CD8-positive, alpha-beta T cell (primary cell): ENCODE measurements at regions of chr1 and their contacts with region 1.

Region 1: DNA sequence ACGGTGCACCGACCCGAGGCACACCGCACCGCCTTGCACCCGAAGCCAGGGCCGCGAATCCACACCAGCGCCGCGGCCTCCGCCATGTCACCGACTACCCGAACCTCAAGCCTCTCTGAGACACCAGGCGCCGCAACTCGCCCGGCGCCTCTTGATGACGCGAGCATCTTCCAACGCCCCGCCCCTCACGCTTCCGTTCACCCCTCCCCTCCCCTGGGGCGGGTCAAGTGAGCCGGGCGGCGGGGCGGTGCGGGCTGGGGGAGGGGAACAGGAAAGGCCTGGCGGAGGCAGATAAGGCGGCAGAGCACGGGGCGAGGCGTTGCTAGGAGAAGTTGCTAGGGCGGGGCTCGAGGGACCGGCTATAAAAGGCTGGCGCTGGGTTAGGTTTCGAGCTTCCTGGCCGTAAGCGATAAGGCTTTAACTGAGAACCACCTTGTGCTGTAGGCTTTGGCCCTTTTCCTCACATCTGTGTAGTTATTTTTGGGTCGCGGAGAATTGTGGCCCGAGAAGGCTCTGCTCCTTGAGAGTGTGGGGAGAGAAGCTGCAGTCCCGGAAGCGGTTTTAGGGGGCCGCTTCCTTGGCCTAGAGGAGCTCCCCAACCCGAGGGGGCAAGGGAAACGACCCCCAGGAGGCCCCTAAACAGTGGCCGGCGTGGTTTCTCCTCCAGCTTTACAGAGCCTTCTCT is at the start of gene SDE2:
- DNase-seq: peak; percentile 99 to 100 (median 100)
- ATAC-seq: peak; percentile 80
- H3K4me3 ChIP-seq: peak within 1 kb of the TSS; percentile 82 to 92
- H3K4me3 Mint-ChIP-seq: peak within 1 kb of the TSS; percentile 100
- H3K27ac ChIP-seq: peak within 1 kb of the TSS; percentile 99
- H3K27ac Mint-ChIP-seq: peak within 1 kb of the TSS; percentile 100
- H3K4me1 ChIP-seq: peaks cover 88% of the 10 kb centered on the region
- H3K4me1 Mint-ChIP-seq: peaks cover 79% of the 10 kb centered on the region
- H3K27me3 ChIP-seq: no peaks in the 10 kb centered on the region
- H3K27me3 Mint-ChIP-seq: no peaks in the 10 kb centered on the region
- CTCF ChIP-seq: no peak
- total RNA-seq, gene SDE2: 53.3 to 55.3 TPM

Region 2: DNA sequence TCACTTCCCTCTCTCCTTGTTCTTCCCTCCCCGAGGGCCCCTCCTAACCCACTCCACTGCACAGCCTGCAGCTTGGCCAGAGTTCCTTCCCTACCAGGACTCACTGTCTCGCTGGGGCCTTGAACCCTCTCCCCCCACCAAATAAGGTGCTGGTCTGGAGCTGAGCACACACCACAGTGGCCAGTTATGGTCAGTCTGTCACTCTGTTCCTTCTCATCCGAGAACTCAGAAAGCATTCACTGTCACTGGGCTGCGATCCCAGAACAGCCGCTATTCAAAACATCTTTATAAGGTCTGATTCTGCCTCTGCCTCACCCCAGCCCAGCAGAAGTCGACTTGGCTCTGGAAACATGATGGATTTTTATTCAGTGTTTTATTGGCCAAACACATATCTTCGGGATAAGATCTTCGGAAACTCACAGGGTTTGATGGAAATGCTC is 551.7 kb before region 1 on chr1:
- CTCF ChIA-PET with region 1: no interaction called
- POLR2A ChIA-PET with region 1: interaction called, 25 read pairs
- intact Hi-C with region 1: loop called in 1 of 2 experiments (anchors 1 kb)
- DNase-seq: peak in 1 of 9 experiments; percentile 25
- ATAC-seq: no peak
- H3K4me3 ChIP-seq: no peak overlapping the region
- H3K4me3 Mint-ChIP-seq: no peak overlapping the region
- H3K27ac ChIP-seq: no peak overlapping the region
- H3K27ac Mint-ChIP-seq: peak overlapping the region; percentile 14
- H3K4me1 ChIP-seq: peaks cover 35% of the 10 kb centered on the region
- H3K4me1 Mint-ChIP-seq: peaks cover 51% of the 10 kb centered on the region
- H3K27me3 ChIP-seq: no peaks in the 10 kb centered on the region
- H3K27me3 Mint-ChIP-seq: no peaks in the 10 kb centered on the region
- CTCF ChIP-seq: no peak

Region 3: GRCh38 chr1:225881969-225882693 is 117.2 kb before region 1 on chr1 and contains the start of gene TMEM63A:
- CTCF ChIA-PET with region 1: no interaction called
- POLR2A ChIA-PET with region 1: interaction called, 10 read pairs
- intact Hi-C with region 1: no loop called
- DNase-seq: peak; percentile 78 to 95 (median 92)
- ATAC-seq: peak; percentile 72
- H3K4me3 ChIP-seq: peak within 1 kb of the TSS; percentile 85 to 100
- H3K4me3 Mint-ChIP-seq: peak within 1 kb of the TSS; percentile 94
- H3K27ac ChIP-seq: peak within 1 kb of the TSS; percentile 65 to 84
- H3K27ac Mint-ChIP-seq: peak within 1 kb of the TSS; percentile 97
- H3K4me1 ChIP-seq: peaks cover 42% of the 10 kb centered on the region
- H3K4me1 Mint-ChIP-seq: peaks cover 52% of the 10 kb centered on the region
- H3K27me3 ChIP-seq: no peaks in the 10 kb centered on the region
- H3K27me3 Mint-ChIP-seq: no peaks in the 10 kb centered on the region
- CTCF ChIP-seq: no peak
- total RNA-seq, gene TMEM63A: 132 to 144 TPM

Region 4: GRCh38 chr1:225923692-225924555 is 75.4 kb before region 1 on chr1 and contains the start of gene PYCR2:
- CTCF ChIA-PET with region 1: no interaction called
- POLR2A ChIA-PET with region 1: interaction called, 10 read pairs
- intact Hi-C with region 1: loop called (anchors 1 to 2 kb)
- DNase-seq: peak; percentile 90 to 98 (median 92)
- ATAC-seq: peak; percentile 98
- H3K4me3 ChIP-seq: peak within 1 kb of the TSS; percentile 75 to 79
- H3K4me3 Mint-ChIP-seq: peak within 1 kb of the TSS; percentile 94
- H3K27ac ChIP-seq: peak within 1 kb of the TSS; percentile 75 to 91
- H3K27ac Mint-ChIP-seq: peak within 1 kb of the TSS; percentile 93
- H3K4me1 ChIP-seq: peaks cover 75% of the 10 kb centered on the region
- H3K4me1 Mint-ChIP-seq: peaks cover 63% of the 10 kb centered on the region
- H3K27me3 ChIP-seq: no peaks in the 10 kb centered on the region
- H3K27me3 Mint-ChIP-seq: no peaks in the 10 kb centered on the region
- CTCF ChIP-seq: no peak
- total RNA-seq, gene PYCR2: 27.3 to 30.6 TPM

Region 5: DNA sequence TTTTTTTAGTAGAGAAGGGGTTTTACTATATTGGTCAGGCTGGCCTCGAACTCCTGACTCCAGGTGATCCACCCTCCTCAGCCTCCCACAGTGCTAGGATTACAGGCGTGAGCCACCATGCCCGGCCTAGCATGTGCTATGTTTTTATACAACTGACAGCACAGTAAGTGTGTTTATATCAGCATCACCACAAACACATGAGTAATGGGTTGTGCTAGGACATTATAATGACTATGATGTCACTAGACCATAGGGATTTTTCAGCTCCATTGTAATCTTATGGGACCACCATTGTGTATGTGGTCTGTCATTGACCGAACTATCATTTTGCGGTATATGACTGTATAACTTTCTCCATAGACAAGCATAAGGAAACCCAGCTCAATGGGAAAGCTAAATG is 64.7 kb before region 1 on chr1:
- CTCF ChIA-PET with region 1: no interaction called
- POLR2A ChIA-PET with region 1: no interaction called
- intact Hi-C with region 1: no loop called
- DNase-seq: no peak
- ATAC-seq: no peak
- H3K4me3 ChIP-seq: no peak overlapping the region
- H3K4me3 Mint-ChIP-seq: no peak overlapping the region
- H3K27ac ChIP-seq: no peak overlapping the region
- H3K27ac Mint-ChIP-seq: no peak overlapping the region
- H3K4me1 ChIP-seq: peaks cover 4% of the 10 kb centered on the region
- H3K4me1 Mint-ChIP-seq: peaks cover 2% of the 10 kb centered on the region
- H3K27me3 ChIP-seq: no peaks in the 10 kb centered on the region
- H3K27me3 Mint-ChIP-seq: no peaks in the 10 kb centered on the region
- CTCF ChIP-seq: no peak

Region 6: GRCh38 chr1:225944951-225945350 is 54.4 kb before region 1 on chr1:
- CTCF ChIA-PET with region 1: no interaction called
- POLR2A ChIA-PET with region 1: no interaction called
- intact Hi-C with region 1: no loop called
- DNase-seq: peak in 1 of 9 experiments; percentile 35
- ATAC-seq: peak; percentile 52
- H3K4me3 ChIP-seq: no peak overlapping the region
- H3K4me3 Mint-ChIP-seq: peak overlapping the region; percentile 38
- H3K27ac ChIP-seq: no peak overlapping the region
- H3K27ac Mint-ChIP-seq: peak overlapping the region; percentile 42
- H3K4me1 ChIP-seq: peaks cover 13% of the 10 kb centered on the region
- H3K4me1 Mint-ChIP-seq: peaks cover 11% of the 10 kb centered on the region
- H3K27me3 ChIP-seq: no peaks in the 10 kb centered on the region
- H3K27me3 Mint-ChIP-seq: peaks cover 5% of the 10 kb centered on the region
- CTCF ChIP-seq: no peak

Region 7: DNA sequence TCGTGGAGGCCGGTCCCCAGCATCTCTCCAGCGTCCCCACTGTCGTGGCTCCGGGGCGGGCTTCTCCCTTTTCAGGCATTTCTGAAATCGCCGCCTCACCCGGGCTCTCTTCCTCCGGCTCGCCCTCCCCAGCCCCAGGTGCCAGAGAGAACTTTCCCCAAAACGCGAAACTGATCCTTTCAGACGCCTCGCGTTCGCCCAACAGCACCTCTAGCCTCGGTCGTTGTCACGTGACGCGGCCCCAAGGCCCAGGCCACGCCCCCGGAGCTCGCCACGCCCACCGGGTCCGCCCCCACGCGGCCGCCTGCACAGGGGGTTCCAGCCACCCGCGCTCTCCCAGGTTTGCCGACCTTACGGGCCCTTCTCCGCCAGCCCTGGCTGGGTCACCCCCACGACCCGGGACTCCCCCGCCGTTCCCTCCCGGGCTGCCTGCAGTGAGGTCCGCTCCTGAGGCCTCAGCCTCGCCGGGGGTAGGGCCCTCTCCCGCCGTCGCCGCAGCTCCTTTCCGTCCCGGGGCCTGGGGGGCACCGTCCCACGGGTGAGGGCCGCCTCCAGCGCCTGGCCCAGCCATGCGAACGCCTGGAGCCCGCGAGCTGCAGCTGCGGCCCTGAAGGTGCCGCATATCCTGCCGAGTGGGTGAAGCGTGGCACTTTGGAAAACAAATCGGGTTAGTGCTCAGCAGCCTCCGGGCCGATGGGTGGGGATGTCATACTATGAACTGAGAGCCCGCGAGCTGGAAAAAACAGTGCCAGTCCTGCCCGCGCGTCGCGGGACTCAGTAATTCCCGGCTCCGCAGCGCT is 84.1 kb after region 1 on chr1:
- CTCF ChIA-PET with region 1: interaction called, 3 read pairs
- POLR2A ChIA-PET with region 1: interaction called, 15 read pairs
- intact Hi-C with region 1: no loop called
- DNase-seq: peak; percentile 80 to 97 (median 93)
- ATAC-seq: peak; percentile 97
- H3K4me3 ChIP-seq: peak overlapping the region; percentile 78 to 79
- H3K4me3 Mint-ChIP-seq: peak overlapping the region; percentile 90
- H3K27ac ChIP-seq: peak overlapping the region in 1 of 2 experiments; percentile 15
- H3K27ac Mint-ChIP-seq: peak overlapping the region; percentile 81
- H3K4me1 ChIP-seq: peaks cover 10% of the 10 kb centered on the region
- H3K4me1 Mint-ChIP-seq: peaks cover 11% of the 10 kb centered on the region
- H3K27me3 ChIP-seq: no peaks in the 10 kb centered on the region
- H3K27me3 Mint-ChIP-seq: no peaks in the 10 kb centered on the region
- CTCF ChIP-seq: no peak

Region 8: DNA sequence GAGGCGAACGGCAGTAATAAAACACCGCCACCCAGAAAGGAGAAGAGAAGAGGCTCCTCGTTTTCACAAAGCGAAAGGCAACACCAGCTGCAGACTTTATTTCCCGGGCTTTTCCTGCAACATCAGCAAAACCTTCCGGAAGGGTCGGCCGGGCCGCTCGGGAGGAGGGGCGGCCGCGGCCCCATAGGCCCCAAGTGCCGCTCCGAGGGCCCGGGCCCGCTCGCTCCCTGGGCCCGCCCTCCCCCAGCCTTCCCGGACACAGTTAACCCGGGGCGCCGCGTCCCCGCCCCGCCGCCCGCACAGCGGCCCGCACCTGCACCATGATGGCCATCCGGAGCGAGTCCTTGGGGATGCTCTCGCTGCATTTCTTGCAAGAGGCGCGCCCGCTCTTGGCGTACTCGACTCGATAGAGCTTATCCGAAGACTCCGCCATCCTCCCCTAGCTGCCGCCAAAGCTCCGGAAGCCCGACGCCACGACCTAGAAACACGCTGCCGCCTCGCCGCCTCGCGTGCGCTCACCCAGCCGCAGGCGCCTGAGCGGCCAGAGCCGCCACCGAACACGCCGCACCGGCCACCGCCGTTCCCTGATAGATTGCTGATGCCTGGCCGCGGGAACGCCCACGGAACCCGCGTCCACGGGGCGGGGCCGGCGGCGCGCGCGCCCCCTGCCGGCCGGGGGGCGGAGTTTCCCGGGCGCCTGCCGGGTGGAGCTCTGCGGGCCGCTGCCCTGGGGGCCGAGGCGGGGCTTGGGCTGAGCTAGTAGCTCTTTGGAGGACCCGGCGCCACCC is 408.3 kb after region 1 on chr1 and contains the start of gene PARP1:
- CTCF ChIA-PET with region 1: no interaction called
- POLR2A ChIA-PET with region 1: interaction called, 4 read pairs
- intact Hi-C with region 1: loop called in 1 of 2 experiments (anchors 10 kb)
- DNase-seq: peak; percentile 78 to 94 (median 86)
- ATAC-seq: peak; percentile 87
- H3K4me3 ChIP-seq: peak within 1 kb of the TSS; percentile 68 to 92
- H3K4me3 Mint-ChIP-seq: peak within 1 kb of the TSS; percentile 94
- H3K27ac ChIP-seq: peak within 1 kb of the TSS; percentile 64 to 65
- H3K27ac Mint-ChIP-seq: peak within 1 kb of the TSS; percentile 90
- H3K4me1 ChIP-seq: peaks cover 45% of the 10 kb centered on the region
- H3K4me1 Mint-ChIP-seq: peaks cover 46% of the 10 kb centered on the region
- H3K27me3 ChIP-seq: no peaks in the 10 kb centered on the region
- H3K27me3 Mint-ChIP-seq: no peaks in the 10 kb centered on the region
- CTCF ChIP-seq: peak; percentile 73
- total RNA-seq, gene PARP1: 38.6 to 46.2 TPM

Region 9: GRCh38 chr1:226466296-226466695 is 466.9 kb after region 1 on chr1:
- CTCF ChIA-PET with region 1: no interaction called
- POLR2A ChIA-PET with region 1: no interaction called
- intact Hi-C with region 1: no loop called
- DNase-seq: no peak
- ATAC-seq: no peak
- H3K4me3 ChIP-seq: no peak overlapping the region
- H3K4me3 Mint-ChIP-seq: no peak overlapping the region
- H3K27ac ChIP-seq: no peak overlapping the region
- H3K27ac Mint-ChIP-seq: no peak overlapping the region
- H3K4me1 ChIP-seq: no peaks in the 10 kb centered on the region
- H3K4me1 Mint-ChIP-seq: no peaks in the 10 kb centered on the region
- H3K27me3 ChIP-seq: no peaks in the 10 kb centered on the region
- H3K27me3 Mint-ChIP-seq: peaks cover 15% of the 10 kb centered on the region
- CTCF ChIP-seq: no peak

Region 10: DNA sequence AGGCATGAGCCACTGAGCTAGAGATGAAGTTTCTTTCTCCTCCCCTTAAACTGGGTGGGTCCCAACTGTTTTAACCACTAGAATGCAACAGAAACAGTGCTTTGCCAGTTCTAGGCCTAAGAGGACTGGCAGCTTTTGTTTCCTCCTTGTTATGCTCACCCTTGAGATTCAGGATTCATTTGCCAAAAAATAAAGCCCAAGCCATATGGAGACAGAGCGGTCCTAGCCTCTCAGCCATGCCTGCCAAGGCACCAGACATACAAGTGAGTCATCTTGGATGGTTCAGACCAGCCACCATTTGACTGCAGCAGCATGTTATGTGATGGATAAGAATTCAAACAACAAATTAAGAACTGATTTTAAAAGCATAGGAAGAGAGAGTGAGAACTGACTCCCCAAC is 511.1 kb after region 1 on chr1:
- CTCF ChIA-PET with region 1: no interaction called
- POLR2A ChIA-PET with region 1: no interaction called
- intact Hi-C with region 1: no loop called
- DNase-seq: no peak
- ATAC-seq: no peak
- H3K4me3 ChIP-seq: no peak overlapping the region
- H3K4me3 Mint-ChIP-seq: no peak overlapping the region
- H3K27ac ChIP-seq: no peak overlapping the region
- H3K27ac Mint-ChIP-seq: no peak overlapping the region
- H3K4me1 ChIP-seq: no peaks in the 10 kb centered on the region
- H3K4me1 Mint-ChIP-seq: no peaks in the 10 kb centered on the region
- H3K27me3 ChIP-seq: peaks cover 0 to 3% of the 10 kb centered on the region in 2 experiments
- H3K27me3 Mint-ChIP-seq: peaks cover 22% of the 10 kb centered on the region
- CTCF ChIP-seq: no peak